A673 (cell line): ENCODE measurements at regions of chr5 and their contacts with region 1.

Region 1: DNA sequence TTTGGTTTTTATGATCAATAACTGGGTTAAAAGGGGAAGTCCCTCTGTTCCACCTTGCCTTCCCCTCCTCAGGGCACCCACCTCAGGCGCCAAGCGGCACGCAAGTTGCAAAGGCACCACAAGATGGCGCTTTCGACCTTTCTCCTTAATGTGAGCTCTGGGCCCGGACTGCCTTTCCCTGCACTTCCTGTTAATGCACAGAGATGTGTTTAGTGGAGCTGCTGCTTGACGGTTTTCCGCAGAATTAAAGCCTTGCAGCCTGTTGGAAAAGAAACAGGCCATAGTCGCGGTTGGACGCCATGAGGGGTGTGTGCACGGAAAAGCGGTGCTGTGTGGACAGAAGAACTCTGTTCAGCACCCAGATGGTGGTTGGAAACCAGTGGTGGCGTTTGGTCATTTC is 17.9 kb downstream of the CXCL14 start:
- DNase-seq: peak; percentile 87
- H3K4me3 ChIP-seq: no peak overlapping the region
- H3K27ac ChIP-seq: no peak overlapping the region
- H3K4me1 ChIP-seq: peaks cover 5% of the 10 kb centered on the region
- H3K27me3 ChIP-seq: peaks cover 9% of the 10 kb centered on the region
- CTCF ChIP-seq: peak; percentile 91

Region 2: DNA sequence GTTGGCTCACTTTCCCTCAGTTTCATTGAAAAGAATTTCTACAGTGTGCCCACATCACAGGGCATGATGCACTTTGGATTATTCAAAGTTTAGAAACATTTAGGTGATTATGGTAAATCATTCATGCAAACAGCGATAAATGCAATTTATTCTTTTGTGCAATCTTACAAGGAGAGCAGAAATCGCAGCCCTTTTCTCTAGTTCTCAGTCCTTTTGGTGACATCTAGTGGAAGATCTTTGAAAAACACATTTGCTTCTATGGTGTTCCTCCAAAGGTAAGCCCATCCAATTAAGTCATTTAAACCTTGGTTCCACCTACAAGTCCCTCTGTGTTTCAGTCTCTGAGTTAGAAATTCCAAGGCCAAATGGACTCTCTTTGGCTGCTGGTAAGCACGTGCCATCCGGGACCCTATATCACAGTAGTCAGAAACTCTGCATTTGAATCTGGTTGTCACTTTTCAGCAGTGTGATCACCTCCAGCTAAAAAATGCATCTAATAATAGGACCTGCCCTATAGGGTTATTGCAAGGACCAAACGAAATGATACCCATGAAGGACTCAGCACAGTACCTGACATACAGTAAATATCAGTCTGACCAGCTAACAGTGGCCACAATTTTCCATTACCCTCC is 228.2 kb before region 1 on chr5:
- CTCF ChIA-PET with region 1: no interaction called
- POLR2A ChIA-PET with region 1: no interaction called
- intact Hi-C with region 1: no loop called
- DNase-seq: peak; percentile 62
- H3K4me3 ChIP-seq: no peak overlapping the region
- H3K27ac ChIP-seq: no peak overlapping the region
- H3K4me1 ChIP-seq: no peaks in the 10 kb centered on the region
- H3K27me3 ChIP-seq: no peaks in the 10 kb centered on the region
- CTCF ChIP-seq: peak; percentile 64

Region 3: GRCh38 chr5:135729321-135729786 is 168.5 kb after region 1 on chr5:
- CTCF ChIA-PET with region 1: interaction called, 9 read pairs
- POLR2A ChIA-PET with region 1: no interaction called
- intact Hi-C with region 1: loop called (anchors 2 kb)
- DNase-seq: peak; percentile 43
- H3K4me3 ChIP-seq: no peak overlapping the region
- H3K27ac ChIP-seq: peak overlapping the region; percentile 0
- H3K4me1 ChIP-seq: peaks cover 10% of the 10 kb centered on the region
- H3K27me3 ChIP-seq: no peaks in the 10 kb centered on the region
- CTCF ChIP-seq: peak; percentile 60

Region 4: DNA sequence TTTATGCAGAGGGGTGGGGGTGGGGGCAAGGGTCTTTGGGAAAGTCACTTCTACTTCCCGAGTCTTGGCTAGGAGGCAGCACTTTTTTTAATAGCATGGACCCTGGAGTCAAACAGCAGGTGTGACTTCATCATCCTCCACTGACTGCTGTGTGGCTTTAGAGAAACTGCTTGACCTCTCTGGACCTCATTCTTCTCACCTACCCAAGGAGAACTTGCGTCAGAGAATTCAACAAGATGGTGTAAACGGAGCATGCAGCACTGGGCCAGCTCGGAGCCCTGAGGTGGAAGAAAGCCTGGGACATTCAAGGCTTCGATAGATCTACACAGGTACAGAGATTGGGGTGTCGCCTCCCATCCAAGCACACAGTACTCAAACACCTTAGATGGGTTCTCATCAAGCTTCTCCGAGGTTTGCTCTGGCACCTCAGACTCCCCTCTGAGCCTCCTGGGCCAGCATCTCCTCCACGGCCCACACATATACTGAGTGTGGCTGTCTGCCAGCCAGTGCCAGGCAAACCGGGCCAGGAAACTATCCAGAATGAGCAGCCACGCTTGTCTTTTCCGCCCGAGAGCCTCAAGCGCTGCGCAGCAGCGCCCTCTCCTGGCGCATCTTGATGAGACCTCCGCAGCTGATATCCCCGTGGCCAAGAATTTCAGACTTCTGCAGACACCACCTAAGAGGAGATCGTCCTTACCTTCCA is 269.0 kb after region 1 on chr5:
- CTCF ChIA-PET with region 1: interaction called, 15 read pairs
- POLR2A ChIA-PET with region 1: no interaction called
- intact Hi-C with region 1: loop called (anchors 1 kb)
- DNase-seq: peak; percentile 84
- H3K4me3 ChIP-seq: no peak overlapping the region
- H3K27ac ChIP-seq: no peak overlapping the region
- H3K4me1 ChIP-seq: no peaks in the 10 kb centered on the region
- H3K27me3 ChIP-seq: peaks cover 36% of the 10 kb centered on the region
- CTCF ChIP-seq: peak; percentile 93